ENCODE measurements at regions of chr22 and their contacts with region 1.

Region 1: DNA sequence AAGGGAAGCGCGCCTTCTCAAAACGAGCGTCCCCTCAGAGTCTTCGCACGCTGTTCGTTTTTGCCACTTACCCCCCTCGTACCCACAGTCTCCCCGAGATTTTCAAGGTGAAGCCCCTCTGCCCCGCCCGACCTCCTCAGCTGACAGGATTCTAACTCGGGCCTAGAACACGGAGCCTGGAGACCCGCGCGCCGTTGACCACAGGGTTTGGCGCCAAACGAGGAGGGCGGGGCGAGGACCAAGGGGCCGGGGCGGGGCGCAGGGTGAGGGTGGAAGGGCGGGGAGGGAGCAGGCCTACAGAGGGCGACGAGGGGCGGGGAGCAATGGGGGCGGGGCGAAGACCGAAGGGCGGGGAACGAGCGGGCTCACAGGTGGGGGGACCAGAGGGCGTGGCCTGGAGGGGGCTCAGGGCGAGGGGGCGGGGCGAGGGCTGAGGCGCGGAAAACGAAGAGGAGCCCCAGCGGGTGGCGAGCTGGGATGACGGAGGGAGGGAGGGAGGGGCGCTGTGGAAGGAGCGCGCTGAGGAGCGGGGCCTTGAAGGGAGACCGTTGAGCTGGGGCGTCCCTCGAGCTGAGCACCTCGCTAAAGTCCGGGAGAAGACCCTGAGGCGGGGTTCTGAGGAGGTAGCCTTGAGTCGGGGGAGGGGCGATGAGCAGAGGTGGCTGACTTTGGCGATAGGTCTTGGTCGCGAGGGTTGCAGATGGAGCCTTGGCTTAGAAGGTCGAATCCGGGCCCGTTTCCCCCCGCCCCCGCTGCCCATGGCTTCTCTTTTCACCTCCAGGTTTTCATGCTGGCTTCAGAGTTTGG is at the start of gene DMC1:
- DNase-seq: peak; percentile 92 to 100
- H3K4me3 ChIP-seq: peak within 1 kb of the TSS; percentile 47
- H3K4me1 ChIP-seq: peaks cover 27% of the 10 kb centered on the region
- H3K27me3 ChIP-seq: no peaks in the 10 kb centered on the region

Region 2: GRCh38 chr22:38051900-38052862 is 518.0 kb before region 1 on chr22:
- in situ Hi-C with region 1: loop called (anchors 5 kb)
- DNase-seq: peak; percentile 83 to 91
- H3K4me3 ChIP-seq: no peak overlapping the region
- H3K4me1 ChIP-seq: no peaks in the 10 kb centered on the region; the same call in 1 of the 2 replicates
- H3K27me3 ChIP-seq: peaks cover 5% of the 10 kb centered on the region; the same call in 1 of the 2 replicates